Caco-2 (cell line): ENCODE measurements at regions of chr10 and their contacts with region 1.

Region 1: DNA sequence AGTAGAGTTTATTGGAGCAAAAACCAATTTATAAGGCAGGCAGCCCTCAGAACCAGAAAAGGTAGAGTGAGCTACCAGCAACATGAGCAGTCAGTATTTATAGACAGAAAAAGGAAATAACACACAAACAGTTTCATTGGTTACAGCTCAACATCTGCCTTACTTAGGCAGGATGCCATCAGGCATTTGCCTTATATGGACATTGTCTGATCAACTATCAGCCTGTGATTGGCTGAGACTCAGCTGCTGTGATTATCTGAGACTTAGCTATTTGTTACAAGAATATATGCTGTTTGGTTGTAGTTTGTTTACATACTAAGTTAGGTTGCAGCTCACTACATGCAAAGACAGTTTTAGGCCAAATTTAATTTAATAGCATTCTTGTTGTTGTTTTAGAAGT is 60.4 kb upstream of the CDK1 start:
- DNase-seq: no peak
- H3K4me3 ChIP-seq: no peak overlapping the region
- H3K4me3 Mint-ChIP-seq: no peak overlapping the region
- H3K27ac Mint-ChIP-seq: no peak overlapping the region
- H3K4me1 ChIP-seq: peaks cover 28% of the 10 kb centered on the region
- H3K4me1 Mint-ChIP-seq: peaks cover 21% of the 10 kb centered on the region
- H3K27me3 ChIP-seq: no peaks in the 10 kb centered on the region
- H3K27me3 Mint-ChIP-seq: no peaks in the 10 kb centered on the region
- CTCF ChIP-seq: no peak

Region 2: GRCh38 chr10:60704480-60704879 is 13.4 kb before region 1 on chr10:
- CTCF ChIA-PET with region 1: no interaction called
- POLR2A ChIA-PET with region 1: no interaction called
- intact Hi-C with region 1: loop called (anchors 2 kb)
- DNase-seq: peak in 1 of 2 experiments; percentile 64
- H3K4me3 ChIP-seq: no peak overlapping the region
- H3K4me3 Mint-ChIP-seq: peak overlapping the region; percentile 23
- H3K27ac Mint-ChIP-seq: peak overlapping the region; percentile 19
- H3K4me1 ChIP-seq: peaks cover 50% of the 10 kb centered on the region
- H3K4me1 Mint-ChIP-seq: peaks cover 50% of the 10 kb centered on the region
- H3K27me3 ChIP-seq: no peaks in the 10 kb centered on the region
- H3K27me3 Mint-ChIP-seq: no peaks in the 10 kb centered on the region
- CTCF ChIP-seq: no peak

Region 3: GRCh38 chr10:60869652-60870423 is 152.0 kb after region 1 on chr10:
- CTCF ChIA-PET with region 1: no interaction called
- POLR2A ChIA-PET with region 1: no interaction called
- intact Hi-C with region 1: no loop called
- DNase-seq: no peak
- H3K4me3 ChIP-seq: no peak overlapping the region
- H3K4me3 Mint-ChIP-seq: no peak overlapping the region
- H3K27ac Mint-ChIP-seq: no peak overlapping the region
- H3K4me1 ChIP-seq: no peaks in the 10 kb centered on the region
- H3K4me1 Mint-ChIP-seq: no peaks in the 10 kb centered on the region
- H3K27me3 ChIP-seq: no peaks in the 10 kb centered on the region
- H3K27me3 Mint-ChIP-seq: peaks cover 4% of the 10 kb centered on the region
- CTCF ChIP-seq: no peak